ENCODE measurements at regions of chr10 and their contacts with region 1.

Region 1: GRCh38 chr10:7410862-7411670 is at the start of gene SFMBT2:
- DNase-seq: peak; percentile 63 to 88 (median 84)
- ATAC-seq: peak; percentile 65 to 79
- H3K4me3 ChIP-seq: peak within 1 kb of the TSS; percentile 95
- H3K27ac ChIP-seq: peak within 1 kb of the TSS; percentile 62
- H3K4me1 ChIP-seq: peaks cover 3% of the 10 kb centered on the region
- H3K27me3 ChIP-seq: no peaks in the 10 kb centered on the region
- total RNA-seq, gene SFMBT2: 11.3 to 12.9 (median 12.1) TPM

Region 2: DNA sequence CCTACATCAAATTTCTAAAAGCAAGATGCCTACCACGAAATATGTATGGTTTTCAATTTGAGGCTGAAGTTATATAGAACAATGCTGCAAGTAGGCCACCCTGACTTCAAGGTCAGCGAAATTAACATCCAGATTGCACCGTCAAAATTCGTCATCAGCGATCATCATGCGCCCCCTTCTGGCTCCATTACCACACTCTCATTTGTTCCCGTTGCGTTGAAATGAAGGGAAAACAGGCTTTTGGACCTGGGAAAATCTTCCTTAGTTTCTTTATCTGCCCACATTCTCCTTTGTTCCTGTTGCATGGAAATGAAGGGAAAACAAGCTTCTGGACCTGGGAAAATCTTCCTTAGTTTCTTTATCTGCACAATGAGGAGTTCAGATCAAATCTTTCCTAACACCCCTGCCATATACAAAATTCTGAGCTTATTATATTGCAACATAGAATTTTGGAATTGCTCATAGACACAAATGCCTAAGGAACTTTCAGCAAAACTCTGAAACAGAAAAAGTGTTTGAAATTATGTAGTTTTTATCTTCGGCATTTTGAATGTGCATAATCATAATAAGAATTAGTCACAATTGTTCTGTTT is 732.8 kb before region 1 on chr10:
- intact Hi-C with region 1: loop called in 1 of 4 experiments (anchors 10 kb)
- DNase-seq: peak; percentile 33 to 68 (median 50)
- ATAC-seq: peak in 1 of 2 donors; percentile 50
- H3K4me3 ChIP-seq: no peak overlapping the region
- H3K27ac ChIP-seq: no peak overlapping the region
- H3K4me1 ChIP-seq: no peaks in the 10 kb centered on the region
- H3K27me3 ChIP-seq: no peaks in the 10 kb centered on the region

Region 3: GRCh38 chr10:7111561-7111960 is 299.5 kb before region 1 on chr10:
- intact Hi-C with region 1: loop called in 1 of 4 experiments (anchors 10 kb)
- DNase-seq: no peak
- ATAC-seq: no peak
- H3K4me3 ChIP-seq: no peak overlapping the region
- H3K27ac ChIP-seq: no peak overlapping the region
- H3K4me1 ChIP-seq: no peaks in the 10 kb centered on the region
- H3K27me3 ChIP-seq: no peaks in the 10 kb centered on the region

Region 4: GRCh38 chr10:7260412-7260900 is 150.6 kb before region 1 on chr10:
- intact Hi-C with region 1: loop called (anchors 2 to 5 kb)
- DNase-seq: peak; percentile 70 to 80 (median 72)
- ATAC-seq: peak; percentile 92 to 95
- H3K4me3 ChIP-seq: no peak overlapping the region
- H3K27ac ChIP-seq: peak overlapping the region; percentile 43
- H3K4me1 ChIP-seq: peaks cover 2% of the 10 kb centered on the region
- H3K27me3 ChIP-seq: no peaks in the 10 kb centered on the region

Region 5: DNA sequence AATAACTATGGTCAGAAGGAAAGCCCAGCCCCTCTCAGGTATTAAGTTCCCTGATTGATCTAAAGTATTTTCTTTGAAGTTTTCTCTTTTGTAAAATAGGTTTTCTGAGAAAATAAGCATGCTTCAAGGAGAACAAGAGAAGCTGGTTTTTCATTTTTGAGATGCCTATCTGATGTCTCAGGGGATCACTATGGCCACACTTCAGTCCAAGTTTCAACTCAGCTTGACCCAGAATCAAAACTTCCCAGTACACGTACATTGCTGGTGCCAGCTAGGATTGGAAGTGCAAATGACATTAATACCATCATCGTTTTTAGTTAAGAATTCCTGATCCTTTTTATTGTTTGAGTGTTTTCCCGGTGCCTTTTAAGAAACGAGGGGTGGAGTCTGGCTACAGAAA is 248.5 kb after region 1 on chr10:
- intact Hi-C with region 1: no loop called
- DNase-seq: no peak
- ATAC-seq: no peak
- H3K4me3 ChIP-seq: no peak overlapping the region
- H3K27ac ChIP-seq: no peak overlapping the region
- H3K4me1 ChIP-seq: no peaks in the 10 kb centered on the region
- H3K27me3 ChIP-seq: no peaks in the 10 kb centered on the region